Activated CD4-positive, alpha-beta T cell treated with anti-CD3 and anti-CD28 coated beads for 36 hours (primary cell): ENCODE measurements at regions of chr3 and their contacts with region 1.

Region 1: DNA sequence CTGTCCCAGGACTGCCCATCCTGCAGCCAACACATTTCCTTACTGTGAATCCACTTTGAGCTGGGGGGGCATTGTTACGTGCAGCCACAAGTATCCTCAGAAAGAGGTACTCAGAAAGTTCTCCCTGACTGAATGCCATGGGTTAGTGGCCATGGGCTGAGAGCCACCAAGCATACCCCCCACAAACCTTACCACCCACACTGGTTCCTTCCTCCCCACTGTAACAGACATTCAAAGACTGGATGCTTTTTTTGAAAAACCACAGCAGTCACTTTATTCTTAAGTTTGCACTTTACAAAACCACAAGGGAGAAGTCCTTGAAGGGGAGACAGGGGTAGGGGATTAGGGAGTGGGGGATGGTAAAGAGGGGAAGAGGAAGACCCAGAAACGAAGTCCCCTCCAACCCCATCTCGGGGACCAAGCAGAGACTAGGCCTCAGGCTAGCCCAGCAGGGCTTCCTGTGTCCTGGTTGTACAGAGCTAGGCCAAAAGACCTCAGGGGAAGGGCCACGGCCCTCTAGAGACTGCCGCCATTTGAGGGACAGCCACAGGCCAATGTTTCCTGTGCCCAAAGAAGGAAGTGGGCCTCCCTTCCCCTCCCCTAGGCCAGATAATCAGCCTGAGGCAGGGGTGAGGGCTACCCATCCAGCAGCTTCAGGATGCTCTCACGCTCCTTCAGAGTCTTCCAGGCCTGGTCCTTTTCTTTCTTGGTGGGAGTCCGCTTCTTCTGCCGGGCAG is 10.1 kb upstream of the CAMK1 start:
- DNase-seq: peak; percentile 56
- ATAC-seq: peak; percentile 22
- H3K4me3 Mint-ChIP-seq: no peak overlapping the region
- H3K27ac Mint-ChIP-seq: peak overlapping the region; percentile 95
- H3K4me1 Mint-ChIP-seq: peaks cover 61% of the 10 kb centered on the region
- H3K27me3 Mint-ChIP-seq: no peaks in the 10 kb centered on the region

Region 2: GRCh38 chr3:9485248-9485647 is 294.6 kb before region 1 on chr3:
- CTCF ChIA-PET with region 1: no interaction called
- POLR2A ChIA-PET with region 1: no interaction called
- intact Hi-C with region 1: no loop called
- DNase-seq: no peak
- ATAC-seq: no peak
- H3K4me3 Mint-ChIP-seq: no peak overlapping the region
- H3K27ac Mint-ChIP-seq: no peak overlapping the region
- H3K4me1 Mint-ChIP-seq: no peaks in the 10 kb centered on the region
- H3K27me3 Mint-ChIP-seq: no peaks in the 10 kb centered on the region

Region 3: GRCh38 chr3:9749645-9750555 is 30.0 kb before region 1 on chr3 and contains the start of gene OGG1:
- CTCF ChIA-PET with region 1: interaction called, 5 read pairs
- POLR2A ChIA-PET with region 1: interaction called, 6 read pairs
- intact Hi-C with region 1: loop called in 1 of 2 experiments (anchors 1 kb)
- DNase-seq: peak; percentile 98
- ATAC-seq: peak; percentile 94
- H3K4me3 Mint-ChIP-seq: peak within 1 kb of the TSS; percentile 87
- H3K27ac Mint-ChIP-seq: peak within 1 kb of the TSS; percentile 91
- H3K4me1 Mint-ChIP-seq: peaks cover 46% of the 10 kb centered on the region
- H3K27me3 Mint-ChIP-seq: no peaks in the 10 kb centered on the region
- total RNA-seq, gene OGG1: 36.4 to 61.6 TPM

Region 4: DNA sequence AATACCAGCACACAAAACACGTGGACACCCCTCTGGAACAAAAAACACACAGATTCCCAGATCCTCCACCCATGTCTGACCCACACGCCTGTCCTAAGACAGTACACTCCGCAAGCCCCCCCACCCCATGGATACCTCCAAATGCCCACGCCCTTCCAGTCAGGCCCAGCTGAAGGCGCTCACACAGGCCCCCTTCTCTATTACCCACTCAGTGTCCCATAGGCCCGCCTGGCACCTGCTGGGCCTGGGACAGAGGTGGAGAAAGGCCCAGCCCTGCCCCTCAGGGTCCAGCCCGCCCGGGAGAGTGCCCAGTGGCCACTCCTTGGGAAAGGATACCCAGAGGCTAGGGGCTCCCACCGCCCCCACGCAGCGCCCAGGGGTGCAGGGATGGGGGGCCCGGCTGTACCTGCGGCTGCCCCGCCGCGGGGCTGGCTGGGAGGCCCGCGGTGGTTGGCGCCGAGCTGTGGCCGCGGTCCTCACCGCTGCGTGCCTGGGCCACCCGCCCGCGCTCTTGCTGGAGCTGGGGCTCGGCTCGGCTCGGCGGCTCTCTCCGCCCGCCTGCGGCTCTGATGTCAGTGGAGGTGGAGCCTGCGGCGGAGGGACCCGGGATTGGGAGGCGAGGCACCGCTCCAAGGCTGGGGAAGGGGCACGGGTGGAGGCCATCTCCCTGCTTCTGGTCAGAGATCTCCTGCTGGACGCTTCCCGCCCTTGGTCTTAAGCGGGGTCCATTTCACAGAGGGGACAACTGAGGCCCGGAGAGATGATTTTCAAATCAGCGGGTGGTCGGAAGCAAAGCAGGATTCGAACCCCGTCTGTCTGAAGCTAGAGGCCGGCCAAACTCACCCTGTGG is 10.2 kb before region 1 on chr3 and contains the start of gene CAMK1:
- CTCF ChIA-PET with region 1: interaction called, 8 read pairs
- POLR2A ChIA-PET with region 1: interaction called, 7 read pairs
- intact Hi-C with region 1: loop called in 1 of 2 experiments (anchors 1 kb)
- DNase-seq: peak; percentile 88
- ATAC-seq: peak; percentile 97
- H3K4me3 Mint-ChIP-seq: peak within 1 kb of the TSS; percentile 79
- H3K27ac Mint-ChIP-seq: peak within 1 kb of the TSS; percentile 78
- H3K4me1 Mint-ChIP-seq: peaks cover 21% of the 10 kb centered on the region
- H3K27me3 Mint-ChIP-seq: no peaks in the 10 kb centered on the region
- total RNA-seq, gene CAMK1: 48.4 to 53.1 TPM

Region 5: GRCh38 chr3:10242182-10243065 is 462.5 kb after region 1 on chr3:
- CTCF ChIA-PET with region 1: no interaction called
- POLR2A ChIA-PET with region 1: no interaction called
- intact Hi-C with region 1: loop called in 1 of 2 experiments (anchors 5 kb)
- DNase-seq: peak; percentile 91
- ATAC-seq: peak; percentile 94
- H3K4me3 Mint-ChIP-seq: peak overlapping the region; percentile 42
- H3K27ac Mint-ChIP-seq: peak overlapping the region; percentile 93
- H3K4me1 Mint-ChIP-seq: peaks cover 62% of the 10 kb centered on the region
- H3K27me3 Mint-ChIP-seq: no peaks in the 10 kb centered on the region